ENCODE measurements at regions of chr17 and their contacts with region 1.

Region 1: GRCh38 chr17:2386400-2387085 is 14.3 kb downstream of the MNT start:
- DNase-seq: no peak
- ATAC-seq: no peak
- H3K4me3 Mint-ChIP-seq: no peak overlapping the region
- H3K27ac Mint-ChIP-seq: no peak overlapping the region
- H3K4me1 Mint-ChIP-seq: peaks cover 22% of the 10 kb centered on the region
- H3K27me3 Mint-ChIP-seq: no peaks in the 10 kb centered on the region
- CTCF ChIP-seq: no peak

Region 2: DNA sequence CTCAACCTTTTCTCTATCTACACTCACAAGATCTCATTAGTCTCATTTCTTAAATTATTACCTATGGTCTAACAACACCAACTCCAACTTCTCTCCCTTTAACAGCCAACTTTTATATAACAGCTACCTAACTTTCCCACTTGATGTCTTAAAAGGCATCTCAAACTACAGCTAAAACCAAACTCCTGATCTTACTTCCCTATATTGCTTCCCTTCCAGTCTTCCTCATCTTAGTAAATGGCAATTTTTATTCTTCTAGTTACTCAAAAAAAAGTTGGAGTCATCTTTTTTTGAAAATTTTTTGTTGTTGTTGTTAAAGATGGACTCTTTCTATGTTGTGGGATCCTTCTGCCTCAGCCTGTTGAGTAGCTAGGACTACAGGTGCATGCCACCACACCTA is 67.5 kb before region 1 on chr17:
- CTCF ChIA-PET with region 1: no interaction called
- POLR2A ChIA-PET with region 1: no interaction called
- intact Hi-C with region 1: no loop called
- DNase-seq: no peak
- ATAC-seq: no peak
- H3K4me3 Mint-ChIP-seq: no peak overlapping the region
- H3K27ac Mint-ChIP-seq: no peak overlapping the region
- H3K4me1 Mint-ChIP-seq: no peaks in the 10 kb centered on the region
- H3K27me3 Mint-ChIP-seq: no peaks in the 10 kb centered on the region
- CTCF ChIP-seq: no peak

Region 3: DNA sequence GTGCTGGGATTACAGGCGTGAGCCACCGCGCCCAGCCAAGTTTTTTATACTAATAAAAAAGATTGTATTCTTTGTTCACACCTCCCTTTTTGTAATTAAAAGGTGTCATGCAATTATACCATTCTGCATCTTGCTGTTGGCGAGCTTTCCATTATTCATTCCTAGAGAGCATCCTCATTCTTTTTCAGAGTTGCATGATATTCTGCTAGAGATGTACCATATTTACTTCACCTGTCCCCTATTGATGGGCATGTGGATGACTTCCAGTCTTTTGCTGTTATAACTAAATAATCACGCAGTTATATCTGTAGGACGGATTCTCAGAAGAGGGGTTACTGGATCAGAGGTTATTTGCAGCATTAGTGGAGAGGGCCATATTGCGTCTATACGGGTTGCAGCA is 32.2 kb before region 1 on chr17:
- CTCF ChIA-PET with region 1: interaction called, 19 read pairs
- POLR2A ChIA-PET with region 1: no interaction called
- intact Hi-C with region 1: no loop called
- DNase-seq: no peak
- ATAC-seq: no peak
- H3K4me3 Mint-ChIP-seq: no peak overlapping the region
- H3K27ac Mint-ChIP-seq: peak overlapping the region; percentile 28
- H3K4me1 Mint-ChIP-seq: peaks cover 16% of the 10 kb centered on the region
- H3K27me3 Mint-ChIP-seq: no peaks in the 10 kb centered on the region
- CTCF ChIP-seq: no peak

Region 4: DNA sequence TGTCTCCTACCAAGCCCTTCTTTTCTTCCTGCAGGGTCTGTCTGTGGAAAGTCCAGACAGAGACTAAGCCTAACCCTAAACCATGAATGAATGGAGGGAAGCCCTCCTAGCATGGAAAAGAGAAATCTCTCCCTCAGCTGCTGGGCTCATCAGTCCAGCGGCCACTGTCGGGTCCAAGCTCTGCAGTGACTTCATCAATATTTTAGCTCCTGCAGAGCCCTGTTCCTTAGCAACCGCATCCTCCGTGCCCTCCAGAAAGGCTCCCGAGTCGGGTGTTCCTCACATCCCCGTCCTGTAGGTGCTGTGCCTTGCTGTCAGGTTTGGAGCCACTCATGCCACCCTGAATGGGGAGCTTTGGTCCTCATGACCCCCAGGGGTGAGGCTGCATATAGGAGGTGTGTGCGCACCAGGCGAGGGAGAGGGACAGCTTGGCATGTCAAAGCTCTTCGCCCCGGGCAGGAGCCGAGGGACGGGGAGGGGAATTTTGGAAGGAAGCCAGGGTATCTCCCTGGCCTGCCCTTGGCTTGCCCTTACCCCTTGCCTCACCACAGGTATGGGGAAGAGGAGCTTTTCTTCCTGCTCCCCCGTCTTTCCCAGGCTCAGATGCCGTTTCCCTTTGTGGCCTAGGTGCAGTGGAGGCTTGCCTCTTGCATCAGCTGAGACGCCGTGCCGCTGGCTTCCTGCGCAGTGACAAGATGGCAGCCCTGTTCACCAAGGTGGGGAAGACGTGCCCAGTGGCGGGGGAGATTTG is 25.4 kb before region 1 on chr17:
- CTCF ChIA-PET with region 1: interaction called, 15 read pairs
- POLR2A ChIA-PET with region 1: no interaction called
- intact Hi-C with region 1: no loop called
- DNase-seq: no peak
- ATAC-seq: no peak
- H3K4me3 Mint-ChIP-seq: no peak overlapping the region
- H3K27ac Mint-ChIP-seq: no peak overlapping the region
- H3K4me1 Mint-ChIP-seq: no peaks in the 10 kb centered on the region
- H3K27me3 Mint-ChIP-seq: no peaks in the 10 kb centered on the region
- CTCF ChIP-seq: no peak

Region 5: DNA sequence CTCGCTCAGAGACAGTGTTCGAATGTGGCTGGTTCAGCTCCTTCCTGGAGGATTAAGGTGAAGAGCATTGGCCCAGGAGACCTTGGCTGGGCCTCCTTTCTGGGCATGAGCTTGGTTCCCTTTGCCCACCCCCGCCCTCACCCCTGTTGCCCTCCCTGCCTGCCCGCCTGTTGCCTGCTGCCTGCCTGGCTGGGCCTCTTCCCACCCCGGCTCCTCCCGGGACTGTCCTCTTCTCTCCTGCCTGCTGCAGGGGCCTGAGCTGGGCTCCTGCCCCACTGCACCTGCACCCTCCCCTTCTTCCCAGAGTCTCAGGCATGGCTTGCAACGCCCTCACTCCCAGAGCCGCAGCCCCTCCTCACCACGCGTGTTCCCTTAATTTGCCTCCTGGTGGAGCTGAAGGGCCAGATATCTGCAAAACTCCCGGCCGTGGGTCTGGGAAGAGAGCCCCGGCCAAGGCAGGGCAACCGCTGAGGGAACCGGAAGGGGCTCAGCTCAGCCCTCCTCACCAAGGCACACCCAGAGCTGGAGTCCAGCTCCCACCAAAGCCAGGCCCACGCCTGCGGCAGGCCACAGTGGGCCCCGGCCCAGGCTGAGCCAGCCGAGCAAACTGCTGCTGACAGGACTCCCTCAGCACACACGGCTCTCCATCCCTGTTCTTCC is 16.9 kb before region 1 on chr17:
- CTCF ChIA-PET with region 1: interaction called, 24 read pairs
- POLR2A ChIA-PET with region 1: interaction called, 5 read pairs
- intact Hi-C with region 1: no loop called
- DNase-seq: no peak
- ATAC-seq: no peak
- H3K4me3 Mint-ChIP-seq: no peak overlapping the region
- H3K27ac Mint-ChIP-seq: no peak overlapping the region
- H3K4me1 Mint-ChIP-seq: no peaks in the 10 kb centered on the region
- H3K27me3 Mint-ChIP-seq: no peaks in the 10 kb centered on the region
- CTCF ChIP-seq: no peak

Region 6: GRCh38 chr17:2374549-2375277 is 11.8 kb before region 1 on chr17:
- CTCF ChIA-PET with region 1: interaction called, 24 read pairs
- POLR2A ChIA-PET with region 1: interaction called, 5 read pairs
- intact Hi-C with region 1: no loop called
- DNase-seq: no peak
- ATAC-seq: no peak
- H3K4me3 Mint-ChIP-seq: no peak overlapping the region
- H3K27ac Mint-ChIP-seq: no peak overlapping the region
- H3K4me1 Mint-ChIP-seq: no peaks in the 10 kb centered on the region
- H3K27me3 Mint-ChIP-seq: no peaks in the 10 kb centered on the region
- CTCF ChIP-seq: no peak

Region 7: DNA sequence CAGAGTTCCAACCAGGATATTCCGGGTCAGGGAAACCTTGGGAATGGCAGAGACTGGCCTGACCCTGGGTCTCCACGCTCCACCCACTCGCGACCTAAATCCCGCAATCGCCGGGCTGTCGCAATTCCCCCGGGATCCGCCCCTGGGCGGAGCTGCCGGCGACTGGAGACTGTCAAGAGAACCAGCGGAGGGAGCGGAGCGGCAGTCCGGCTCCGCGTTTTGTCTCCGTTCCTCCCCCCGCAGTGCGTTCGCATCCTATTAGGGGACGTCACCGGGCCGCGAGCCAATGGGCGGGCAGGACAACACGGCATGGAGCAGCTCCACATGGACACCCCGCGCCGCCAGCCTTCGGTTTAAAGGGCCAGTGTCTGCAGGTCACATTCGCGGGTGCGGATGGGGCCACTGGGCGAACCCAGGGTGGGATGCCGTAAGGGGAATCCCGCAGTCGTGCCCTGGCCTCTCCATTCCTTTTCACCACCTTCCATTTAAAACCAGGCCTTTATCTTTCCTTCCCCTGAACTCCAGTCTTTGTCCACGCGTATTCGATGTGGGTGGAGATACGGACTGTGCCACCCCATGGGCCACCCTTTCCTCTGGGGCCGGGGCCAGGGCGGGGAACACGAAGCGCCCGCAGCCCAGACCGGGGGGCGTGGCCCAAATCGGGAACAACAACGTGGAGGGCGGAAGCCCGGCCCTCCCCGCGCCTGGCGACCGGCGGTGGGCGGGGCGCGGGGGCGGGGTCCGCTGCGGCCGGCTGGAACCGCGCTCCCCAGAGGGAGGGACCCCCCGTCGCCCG is 15.1 kb after region 1 on chr17:
- CTCF ChIA-PET with region 1: interaction called, 46 read pairs
- POLR2A ChIA-PET with region 1: interaction called, 61 read pairs
- intact Hi-C with region 1: no loop called
- DNase-seq: peak; percentile 100
- ATAC-seq: peak; percentile 64
- H3K4me3 Mint-ChIP-seq: peak overlapping the region; percentile 97
- H3K27ac Mint-ChIP-seq: peak overlapping the region; percentile 94
- H3K4me1 Mint-ChIP-seq: peaks cover 41% of the 10 kb centered on the region
- H3K27me3 Mint-ChIP-seq: no peaks in the 10 kb centered on the region
- CTCF ChIP-seq: no peak

Region 8: DNA sequence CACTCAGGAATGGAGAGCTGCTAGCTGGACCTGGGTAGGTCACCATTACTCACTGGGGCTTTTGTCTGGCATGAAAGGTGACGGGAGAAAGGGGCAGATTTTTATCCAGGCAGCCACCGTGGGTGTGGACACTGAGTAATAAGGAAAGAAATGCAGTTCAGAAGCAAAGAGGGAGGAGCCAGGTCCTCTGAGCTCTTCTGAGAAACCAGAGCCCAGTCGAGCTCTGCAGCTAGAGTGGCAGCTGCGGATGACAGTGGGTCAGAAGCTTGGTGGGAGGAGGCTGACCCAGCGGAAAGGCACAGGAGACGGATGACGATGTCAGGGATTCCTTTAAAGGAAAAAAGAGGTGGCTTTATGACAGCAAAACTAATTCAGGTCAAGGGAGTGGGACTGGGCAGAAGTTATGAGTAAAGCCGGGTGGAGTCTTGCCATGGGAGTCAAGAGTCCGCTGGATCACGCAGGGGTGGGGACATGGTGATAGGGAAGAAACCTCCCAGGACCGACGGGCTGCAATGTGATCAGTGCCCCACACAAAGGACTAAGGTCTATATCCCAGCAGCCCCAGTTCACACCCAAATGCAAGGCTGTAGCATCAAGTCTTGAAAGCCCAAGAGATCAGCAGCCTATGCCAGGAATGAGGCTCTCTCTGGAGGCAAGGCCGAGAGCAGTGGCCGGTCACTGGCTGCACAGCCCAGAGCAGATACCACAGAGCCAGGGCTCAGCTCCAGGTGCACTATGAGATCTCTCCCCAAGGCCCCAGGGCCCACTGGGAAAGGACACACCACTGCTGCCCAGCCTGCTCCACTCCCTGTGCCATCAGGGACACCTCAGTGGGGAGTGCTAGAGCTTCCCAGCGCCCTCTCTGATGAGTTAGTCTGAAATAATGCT is 20.6 kb after region 1 on chr17:
- CTCF ChIA-PET with region 1: interaction called, 463 read pairs
- POLR2A ChIA-PET with region 1: interaction called, 61 read pairs
- intact Hi-C with region 1: no loop called
- DNase-seq: peak; percentile 55
- ATAC-seq: peak; percentile 53
- H3K4me3 Mint-ChIP-seq: no peak overlapping the region
- H3K27ac Mint-ChIP-seq: peak overlapping the region; percentile 68
- H3K4me1 Mint-ChIP-seq: peaks cover 23% of the 10 kb centered on the region
- H3K27me3 Mint-ChIP-seq: no peaks in the 10 kb centered on the region
- CTCF ChIP-seq: no peak

Measured in activated CD8-positive, alpha-beta T cell treated with anti-CD3 and anti-CD28 coated beads for 36 hours (primary cell).